Breast epithelium (tissue), 4 donors: ENCODE measurements at regions of chr16 and their contacts with region 1.

Region 1: DNA sequence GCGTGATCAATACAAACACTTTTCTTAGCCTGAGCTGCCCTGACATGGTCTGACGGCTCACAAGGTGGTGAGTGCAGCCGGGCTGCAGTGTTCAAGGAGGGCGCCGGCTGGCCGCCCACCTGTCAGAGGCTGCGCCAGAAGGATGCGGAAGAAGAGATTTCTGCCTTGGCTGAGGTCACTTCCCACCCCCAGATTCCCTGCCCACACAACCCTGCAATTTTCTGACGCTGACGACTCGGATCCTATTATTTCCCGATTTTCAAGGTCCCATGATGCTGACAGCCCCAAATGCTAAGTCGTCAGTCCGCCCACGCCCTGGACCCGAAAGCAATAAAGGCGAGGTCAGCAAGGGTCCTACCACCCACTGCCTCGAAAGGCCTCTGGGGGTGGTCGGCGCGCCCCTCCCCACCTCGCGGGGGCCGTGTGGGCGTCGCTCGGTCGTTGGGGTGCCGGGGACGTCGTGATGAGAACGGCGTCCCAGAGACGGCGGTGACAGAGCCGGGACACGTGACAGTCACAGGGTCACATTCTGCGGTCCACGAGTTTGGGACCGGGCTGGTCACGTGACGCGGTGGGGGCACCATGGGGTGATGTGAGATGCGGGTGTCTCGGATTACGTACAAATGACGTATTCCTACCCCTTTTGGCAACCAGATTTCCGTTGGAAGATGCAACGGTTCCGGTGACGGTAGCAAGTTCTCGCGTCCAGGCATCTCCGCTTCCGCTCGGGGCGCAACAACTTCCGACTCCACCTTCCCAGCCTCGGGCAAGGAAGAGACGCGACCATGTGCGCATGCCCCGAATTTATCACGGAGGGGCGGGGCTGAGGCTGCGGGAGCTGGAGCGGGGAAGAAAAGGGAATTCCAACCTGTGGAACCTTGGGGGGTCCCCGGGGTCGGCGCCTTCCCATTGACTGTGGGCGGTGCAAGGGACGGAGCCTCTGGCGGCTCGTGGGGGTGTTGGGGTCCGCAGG is at the start of gene STX4:
- DNase-seq: peak; percentile 97
- H3K4me3 ChIP-seq: peak within 1 kb of the TSS; percentile 84 to 97 (median 93)
- H3K27ac ChIP-seq: peak within 1 kb of the TSS; percentile 93 to 99
- H3K4me1 ChIP-seq: peaks cover 0 to 5% of the 10 kb centered on the region in 2 donors
- H3K27me3 ChIP-seq: no peaks in the 10 kb centered on the region
- CTCF ChIP-seq: peak in 2 of 3 donors; percentile 8 to 18
- POLR2A ChIP-seq: peak; percentile 36
- total RNA-seq, gene STX4: 44.3 to 59.0 (median 52.2) TPM

Region 2: GRCh38 chr16:29307598-29308507 is 1725.2 kb before region 1 on chr16:
- intact Hi-C with region 1: loop called (anchors 10 kb)
- DNase-seq: no peak
- H3K4me3 ChIP-seq: no peak overlapping the region
- H3K27ac ChIP-seq: peak overlapping the region in 1 of 2 donors; percentile 55
- H3K4me1 ChIP-seq: no peaks in the 10 kb centered on the region
- H3K27me3 ChIP-seq: no peaks in the 10 kb centered on the region
- CTCF ChIP-seq: no peak
- POLR2A ChIP-seq: no peak

Region 3: DNA sequence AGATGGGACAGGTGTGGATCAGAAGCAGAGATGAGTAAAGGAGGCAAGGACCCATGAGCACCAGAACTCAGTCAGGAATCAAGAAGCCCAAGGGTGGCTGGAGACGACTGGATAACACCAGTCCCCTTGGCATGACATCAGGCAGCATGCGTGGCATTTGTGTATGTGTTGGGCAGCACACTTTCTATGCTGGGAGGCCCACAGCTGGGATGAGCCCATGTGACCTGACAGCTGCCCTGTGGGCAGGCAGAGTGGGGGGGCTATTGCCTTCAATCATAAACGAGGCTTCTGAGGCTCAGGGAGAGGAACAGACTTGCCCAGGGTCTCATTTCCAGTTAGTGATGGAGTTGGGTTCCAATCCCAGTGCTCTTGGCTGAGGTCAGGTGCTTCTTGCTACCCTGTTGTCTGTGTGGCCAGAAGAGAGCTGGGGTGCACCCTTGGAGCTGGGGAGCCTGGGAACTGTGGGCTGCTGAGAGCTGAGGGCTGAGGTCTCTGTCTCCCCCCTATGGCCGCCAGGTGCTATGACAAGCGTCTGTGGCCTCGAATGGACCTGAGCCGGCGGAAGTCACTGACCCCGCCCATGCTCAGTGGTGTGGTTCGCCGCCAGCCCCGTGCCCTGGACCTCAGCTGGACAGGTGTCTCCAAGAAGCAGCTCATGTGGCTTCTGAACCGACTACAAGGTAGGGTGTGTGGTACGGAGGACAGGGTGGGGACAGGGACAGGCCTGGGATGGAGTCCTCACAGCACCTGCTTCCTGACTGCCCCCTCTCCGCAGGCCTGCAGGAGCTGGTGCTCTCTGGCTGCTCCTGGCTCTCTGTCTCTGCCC is 91.2 kb before region 1 on chr16:
- intact Hi-C with region 1: loop called (anchors 10 kb)
- DNase-seq: peak; percentile 57 to 78
- H3K4me3 ChIP-seq: no peak overlapping the region
- H3K27ac ChIP-seq: peak overlapping the region in 1 of 2 donors; percentile 2
- H3K4me1 ChIP-seq: no peaks in the 10 kb centered on the region
- H3K27me3 ChIP-seq: no peaks in the 10 kb centered on the region
- CTCF ChIP-seq: peak; percentile 71 to 78 (median 74)
- POLR2A ChIP-seq: no peak

Region 4: GRCh38 chr16:30972872-30973271 is 60.1 kb before region 1 on chr16:
- intact Hi-C with region 1: no loop called
- DNase-seq: no peak
- H3K4me3 ChIP-seq: no peak overlapping the region
- H3K27ac ChIP-seq: no peak overlapping the region
- H3K4me1 ChIP-seq: no peaks in the 10 kb centered on the region
- H3K27me3 ChIP-seq: no peaks in the 10 kb centered on the region
- CTCF ChIP-seq: no peak
- POLR2A ChIP-seq: no peak

Region 5: DNA sequence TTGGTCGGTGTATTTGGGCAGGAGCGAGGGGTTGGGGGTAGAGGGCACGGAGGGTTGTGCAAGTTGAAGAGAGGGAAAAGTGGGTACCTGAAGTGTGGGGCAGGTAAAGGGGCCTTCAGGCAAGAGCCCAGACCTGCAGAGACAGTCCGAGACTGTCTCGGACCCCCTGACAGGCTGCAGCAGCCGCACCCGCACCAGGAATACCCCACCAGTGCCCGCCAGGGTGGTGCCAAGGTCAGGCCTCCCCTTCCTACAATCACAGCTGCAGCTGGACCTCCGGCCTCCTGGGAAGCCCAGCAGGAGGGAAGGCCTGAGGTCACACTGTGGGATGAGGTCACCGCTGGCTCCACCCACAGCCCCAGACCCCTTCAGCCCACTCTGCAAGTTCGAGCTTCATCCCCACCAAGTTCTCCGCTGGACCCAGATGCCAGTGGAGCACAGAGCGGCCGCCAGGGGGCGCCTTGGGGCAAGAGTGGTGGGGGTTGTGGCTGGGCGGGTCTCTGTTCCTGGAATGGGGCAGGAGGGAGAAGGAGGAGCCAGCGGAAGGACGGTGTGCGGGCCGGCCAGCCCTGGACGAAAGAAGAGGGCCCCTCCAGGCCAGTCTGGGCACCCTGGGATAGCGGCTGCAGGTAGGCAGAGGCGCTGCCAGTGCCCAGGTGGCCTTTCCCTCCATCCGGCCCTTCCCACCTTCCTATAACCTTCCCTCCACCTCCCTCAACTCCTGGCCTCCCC is 48.2 kb before region 1 on chr16 and contains the start of gene HSD3B7:
- intact Hi-C with region 1: no loop called
- DNase-seq: peak; percentile 77 to 90
- H3K4me3 ChIP-seq: peak within 1 kb of the TSS; percentile 50 to 66 (median 56)
- H3K27ac ChIP-seq: peak within 1 kb of the TSS; percentile 52 to 89
- H3K4me1 ChIP-seq: no peaks in the 10 kb centered on the region
- H3K27me3 ChIP-seq: no peaks in the 10 kb centered on the region
- CTCF ChIP-seq: peak; percentile 92 to 97 (median 96)
- POLR2A ChIP-seq: no peak
- total RNA-seq, gene HSD3B7: 12.1 to 27.8 (median 26.9) TPM

Region 6: DNA sequence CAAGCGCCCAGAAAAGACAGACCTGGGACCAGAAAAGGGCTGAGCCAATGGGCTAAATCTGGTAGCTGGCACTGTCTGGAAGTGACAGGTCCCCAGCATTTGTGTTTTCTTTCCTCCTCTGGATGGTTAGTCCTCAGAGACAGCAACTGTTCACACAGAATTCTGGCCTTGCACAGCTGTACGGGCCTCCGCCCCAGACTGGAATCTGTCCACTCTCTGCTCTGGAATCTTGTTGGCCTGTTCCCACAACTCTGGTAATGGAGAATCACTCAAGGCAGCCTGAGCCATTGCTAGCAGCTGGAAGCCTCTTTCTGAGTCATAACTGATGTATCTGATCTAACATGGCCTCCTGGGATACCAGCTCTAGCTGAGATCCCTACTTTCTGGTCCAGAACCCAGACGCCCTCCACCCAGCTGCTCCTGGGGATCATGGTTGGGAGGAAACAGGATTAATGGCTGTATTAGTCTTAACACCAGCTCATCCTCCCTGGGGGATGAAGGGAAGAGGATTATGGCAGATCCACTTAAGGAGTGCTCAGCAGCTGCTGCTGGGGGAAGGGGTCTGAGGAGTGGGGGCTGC is 31.9 kb after region 1 on chr16:
- intact Hi-C with region 1: no loop called
- DNase-seq: no peak
- H3K4me3 ChIP-seq: peak overlapping the region in 1 of 3 donors; percentile 14
- H3K27ac ChIP-seq: peak overlapping the region in 1 of 2 donors; percentile 71
- H3K4me1 ChIP-seq: no peaks in the 10 kb centered on the region
- H3K27me3 ChIP-seq: no peaks in the 10 kb centered on the region
- CTCF ChIP-seq: no peak
- POLR2A ChIP-seq: no peak